Gastrocnemius medialis (tissue), 4 donors: ENCODE measurements at regions of chr12 and their contacts with region 1.

Region 1: GRCh38 chr12:29782285-29782870 is 1.4 kb downstream of the TMTC1 start:
- DNase-seq: peak; percentile 25 to 29
- ATAC-seq: peak; percentile 66 to 68
- H3K4me3 ChIP-seq: peak overlapping the region; percentile 65 to 85 (median 74)
- H3K27ac ChIP-seq: peak overlapping the region; percentile 86 to 99 (median 97)
- H3K4me1 ChIP-seq: peaks cover 37 to 40% of the 10 kb centered on the region in 2 donors
- H3K27me3 ChIP-seq: no peaks in the 10 kb centered on the region
- CTCF ChIP-seq: no peak
- POLR2A ChIP-seq: peak; percentile 5 to 40

Region 2: DNA sequence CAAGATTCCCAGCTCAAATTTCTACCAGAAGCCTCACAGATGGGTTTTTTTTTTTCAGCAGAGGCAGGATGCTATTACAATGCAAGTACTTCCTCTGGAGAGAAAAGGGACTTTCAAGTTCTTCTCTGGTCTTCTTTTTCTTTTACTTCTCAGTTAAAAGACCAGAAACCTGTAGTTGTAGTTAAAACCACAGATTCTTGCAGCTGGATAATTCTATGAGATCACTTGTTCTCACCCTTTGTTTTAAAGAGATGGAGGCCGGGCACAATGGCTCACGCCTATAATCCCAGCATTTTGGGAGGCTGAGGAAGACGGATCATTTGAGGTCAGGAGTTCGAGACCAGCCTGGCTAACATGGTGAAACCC is 237.3 kb before region 1 on chr12:
- in situ Hi-C with region 1: loop called in 1 of 4 experiments (anchors 10 kb)
- intact Hi-C with region 1: loop called (anchors 5 kb)
- DNase-seq: no peak
- ATAC-seq: no peak
- H3K4me3 ChIP-seq: no peak overlapping the region
- H3K27ac ChIP-seq: peak overlapping the region in 2 of 4 donors; percentile 76 to 84
- H3K4me1 ChIP-seq: peaks cover 42 to 53% of the 10 kb centered on the region in 2 donors
- H3K27me3 ChIP-seq: no peaks in the 10 kb centered on the region
- CTCF ChIP-seq: no peak
- POLR2A ChIP-seq: no peak

Region 3: GRCh38 chr12:29713744-29714143 is 68.6 kb before region 1 on chr12:
- in situ Hi-C with region 1: no loop called
- intact Hi-C with region 1: loop called (anchors 2 kb)
- DNase-seq: no peak
- ATAC-seq: peak; percentile 12 to 25
- H3K4me3 ChIP-seq: no peak overlapping the region
- H3K27ac ChIP-seq: peak overlapping the region; percentile 70 to 79 (median 78)
- H3K4me1 ChIP-seq: peaks cover 43 to 49% of the 10 kb centered on the region in 2 donors
- H3K27me3 ChIP-seq: no peaks in the 10 kb centered on the region
- CTCF ChIP-seq: no peak
- POLR2A ChIP-seq: no peak

Region 4: GRCh38 chr12:29743801-29744200 is 38.6 kb before region 1 on chr12:
- in situ Hi-C with region 1: no loop called
- intact Hi-C with region 1: loop called (anchors 5 kb)
- DNase-seq: peak; percentile 41 to 71
- ATAC-seq: peak; percentile 84 to 85
- H3K4me3 ChIP-seq: no peak overlapping the region
- H3K27ac ChIP-seq: peak overlapping the region; percentile 75 to 93 (median 82)
- H3K4me1 ChIP-seq: peaks cover 52 to 59% of the 10 kb centered on the region in 2 donors
- H3K27me3 ChIP-seq: no peaks in the 10 kb centered on the region
- CTCF ChIP-seq: no peak
- POLR2A ChIP-seq: peak; percentile 35 to 50

Region 5: GRCh38 chr12:29796823-29797263 is 14.5 kb after region 1 on chr12:
- in situ Hi-C with region 1: no loop called
- intact Hi-C with region 1: loop called (anchors 2 kb)
- DNase-seq: peak; percentile 45 to 65
- ATAC-seq: peak; percentile 99 to 100
- H3K4me3 ChIP-seq: peak overlapping the region in 2 of 4 donors; percentile 26 to 30
- H3K27ac ChIP-seq: peak overlapping the region; percentile 29 to 71 (median 40)
- H3K4me1 ChIP-seq: peaks cover 19 to 22% of the 10 kb centered on the region in 2 donors
- H3K27me3 ChIP-seq: no peaks in the 10 kb centered on the region
- CTCF ChIP-seq: peak in 2 of 5 experiments; percentile 14 to 36
- POLR2A ChIP-seq: no peak

Region 6: DNA sequence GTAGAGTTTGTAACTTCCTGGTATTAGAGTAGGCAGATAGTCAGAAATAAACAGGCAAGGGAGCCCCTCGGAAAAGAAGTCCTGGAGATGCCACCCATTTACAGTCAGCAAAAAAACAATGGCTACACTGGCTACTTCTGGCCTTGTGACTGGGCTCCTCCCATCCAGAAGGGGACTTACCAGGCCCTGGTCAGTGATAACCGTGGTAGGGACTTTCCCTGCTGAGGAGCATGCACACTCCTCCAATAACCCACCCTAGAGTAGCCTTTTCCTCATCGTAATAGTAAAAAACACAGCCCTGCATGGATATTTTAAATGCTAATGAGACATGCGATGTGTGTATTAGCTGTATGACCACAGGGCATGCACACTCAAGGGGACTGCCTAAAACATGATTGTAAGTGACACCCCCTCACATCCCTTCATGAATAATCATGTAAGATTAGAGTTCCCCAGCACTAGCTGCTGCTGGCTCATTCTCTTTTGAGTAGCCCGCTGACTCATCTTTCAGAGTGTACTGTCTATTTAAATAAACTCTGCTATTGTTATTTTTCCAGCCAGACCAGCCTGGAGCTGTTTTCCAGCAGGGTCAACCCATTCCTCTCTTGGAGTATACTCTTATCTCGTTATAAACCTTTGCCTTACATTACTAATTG is 415.1 kb after region 1 on chr12:
- in situ Hi-C with region 1: no loop called
- intact Hi-C with region 1: no loop called
- DNase-seq: no peak
- ATAC-seq: no peak
- H3K4me3 ChIP-seq: no peak overlapping the region
- H3K27ac ChIP-seq: no peak overlapping the region
- H3K4me1 ChIP-seq: no peaks in the 10 kb centered on the region
- H3K27me3 ChIP-seq: peaks cover 4 to 18% (median 7%) of the 10 kb centered on the region in 3 donors
- CTCF ChIP-seq: no peak
- POLR2A ChIP-seq: no peak

Region 7: GRCh38 chr12:30243426-30243825 is 461.0 kb after region 1 on chr12:
- in situ Hi-C with region 1: no loop called
- intact Hi-C with region 1: no loop called
- DNase-seq: no peak
- ATAC-seq: no peak
- H3K4me3 ChIP-seq: no peak overlapping the region
- H3K27ac ChIP-seq: no peak overlapping the region
- H3K4me1 ChIP-seq: no peaks in the 10 kb centered on the region
- H3K27me3 ChIP-seq: no peaks in the 10 kb centered on the region
- CTCF ChIP-seq: no peak
- POLR2A ChIP-seq: no peak